ENCODE measurements at regions of chr11 and their contacts with region 1.

Region 1: DNA sequence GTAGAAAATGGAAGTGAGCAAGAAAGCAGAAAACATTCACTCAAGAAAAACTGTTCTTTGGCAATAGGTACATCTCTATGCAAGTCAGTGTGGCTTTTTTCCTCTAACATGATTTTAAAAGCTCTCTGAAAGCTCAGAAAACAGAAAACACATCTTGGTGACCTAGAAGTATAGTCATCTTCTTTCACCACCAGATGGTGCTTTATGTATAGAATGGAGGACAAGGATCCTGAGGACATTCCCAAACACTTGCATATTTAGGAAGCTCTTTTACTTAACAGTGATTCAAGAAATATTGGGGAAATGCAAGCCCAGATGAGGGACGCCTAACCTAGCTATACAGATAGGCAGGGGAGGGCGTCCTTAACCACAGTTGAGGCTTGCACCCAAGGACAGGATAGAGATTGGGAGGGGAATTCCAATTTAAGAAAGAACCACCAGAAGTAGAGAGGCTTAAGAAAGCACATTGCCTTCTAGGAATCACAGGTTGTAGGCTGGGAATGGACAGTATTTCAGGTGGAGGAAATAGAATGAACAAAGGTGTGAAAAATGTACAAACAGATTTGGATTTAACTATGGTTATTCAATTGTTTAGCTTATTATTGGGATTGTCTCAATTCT is 13.8 kb upstream of the CCDC81 start:
- DNase-seq: no peak
- ATAC-seq: peak; percentile 56
- H3K4me3 Mint-ChIP-seq: no peak overlapping the region
- H3K27ac Mint-ChIP-seq: peak overlapping the region; percentile 34; the same call in 1 of the 2 replicates
- H3K4me1 Mint-ChIP-seq: peaks cover 38% of the 10 kb centered on the region
- H3K27me3 Mint-ChIP-seq: no peaks in the 10 kb centered on the region
- CTCF ChIP-seq: no peak

Region 2: DNA sequence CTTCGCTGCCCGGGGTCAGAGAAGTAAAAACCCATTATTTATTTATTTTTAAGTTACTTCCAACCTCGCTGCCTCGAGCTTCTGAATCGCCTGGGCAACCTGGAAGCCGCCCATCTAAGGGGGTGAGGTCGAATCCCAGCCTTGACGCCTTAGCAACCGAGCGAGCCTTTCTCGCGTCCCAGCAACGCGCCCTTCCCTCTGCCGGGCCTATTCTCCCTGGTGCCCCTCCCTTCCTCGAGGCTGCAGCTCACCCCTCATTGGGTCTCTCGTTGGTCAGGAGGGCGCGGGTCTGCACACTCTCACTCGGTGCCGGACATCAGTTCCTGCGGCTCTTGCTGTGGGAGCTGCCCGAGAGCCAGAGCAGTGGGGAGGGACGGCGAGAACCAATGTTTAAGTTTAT is 13.7 kb after region 1 on chr11 and contains the start of gene CCDC81:
- CTCF ChIA-PET with region 1: interaction called, 22 read pairs
- POLR2A ChIA-PET with region 1: interaction called, 3 read pairs
- DNase-seq: peak; percentile 84
- ATAC-seq: peak; percentile 100
- H3K4me3 Mint-ChIP-seq: peak within 1 kb of the TSS; percentile 76
- H3K27ac Mint-ChIP-seq: no peak within 1 kb of the TSS
- H3K4me1 Mint-ChIP-seq: peaks cover 9% of the 10 kb centered on the region
- H3K27me3 Mint-ChIP-seq: peaks cover 6% of the 10 kb centered on the region; the same call in 1 of the 2 replicates
- CTCF ChIP-seq: no peak
- total RNA-seq, gene CCDC81: 0.82 to 1.0 TPM (median 0.98 TPM) in 3 replicates

Region 3: DNA sequence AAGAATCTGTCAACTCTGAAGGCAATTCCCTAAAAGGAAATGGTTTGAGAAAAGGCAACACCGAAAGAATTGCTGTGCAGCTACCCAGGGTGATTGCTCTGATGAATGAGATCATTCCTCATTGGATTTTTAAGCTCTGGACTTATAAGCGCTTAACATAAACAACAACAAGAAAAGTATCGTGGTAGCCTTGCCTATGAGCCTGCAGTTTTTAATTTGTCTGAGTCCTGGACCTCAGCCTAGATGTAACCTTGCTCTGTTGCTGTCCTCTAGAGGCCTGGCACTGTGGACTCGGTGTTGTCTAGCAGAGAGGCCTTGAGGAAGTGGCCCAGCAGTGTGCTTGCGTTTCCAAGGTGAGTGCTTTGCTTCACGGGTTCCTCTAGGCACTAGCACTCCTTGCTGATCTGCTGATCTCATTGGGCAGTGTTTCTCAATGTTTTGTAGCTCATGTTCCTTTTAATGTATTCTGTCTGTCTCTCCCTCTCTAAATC is 34.2 kb after region 1 on chr11:
- CTCF ChIA-PET with region 1: interaction called, 10 read pairs
- POLR2A ChIA-PET with region 1: no interaction called
- DNase-seq: peak; percentile 20
- ATAC-seq: peak; percentile 97
- H3K4me3 Mint-ChIP-seq: no peak overlapping the region
- H3K27ac Mint-ChIP-seq: peak overlapping the region; percentile 61; the same call in 1 of the 2 replicates
- H3K4me1 Mint-ChIP-seq: peaks cover 30% of the 10 kb centered on the region
- H3K27me3 Mint-ChIP-seq: no peaks in the 10 kb centered on the region
- CTCF ChIP-seq: no peak

Region 4: GRCh38 chr11:86418917-86419316 is 58.0 kb after region 1 on chr11:
- CTCF ChIA-PET with region 1: interaction called, 37 read pairs
- POLR2A ChIA-PET with region 1: no interaction called
- DNase-seq: no peak
- ATAC-seq: peak; percentile 71
- H3K4me3 Mint-ChIP-seq: no peak overlapping the region
- H3K27ac Mint-ChIP-seq: no peak overlapping the region
- H3K4me1 Mint-ChIP-seq: no peaks in the 10 kb centered on the region
- H3K27me3 Mint-ChIP-seq: no peaks in the 10 kb centered on the region
- CTCF ChIP-seq: no peak

Region 5: DNA sequence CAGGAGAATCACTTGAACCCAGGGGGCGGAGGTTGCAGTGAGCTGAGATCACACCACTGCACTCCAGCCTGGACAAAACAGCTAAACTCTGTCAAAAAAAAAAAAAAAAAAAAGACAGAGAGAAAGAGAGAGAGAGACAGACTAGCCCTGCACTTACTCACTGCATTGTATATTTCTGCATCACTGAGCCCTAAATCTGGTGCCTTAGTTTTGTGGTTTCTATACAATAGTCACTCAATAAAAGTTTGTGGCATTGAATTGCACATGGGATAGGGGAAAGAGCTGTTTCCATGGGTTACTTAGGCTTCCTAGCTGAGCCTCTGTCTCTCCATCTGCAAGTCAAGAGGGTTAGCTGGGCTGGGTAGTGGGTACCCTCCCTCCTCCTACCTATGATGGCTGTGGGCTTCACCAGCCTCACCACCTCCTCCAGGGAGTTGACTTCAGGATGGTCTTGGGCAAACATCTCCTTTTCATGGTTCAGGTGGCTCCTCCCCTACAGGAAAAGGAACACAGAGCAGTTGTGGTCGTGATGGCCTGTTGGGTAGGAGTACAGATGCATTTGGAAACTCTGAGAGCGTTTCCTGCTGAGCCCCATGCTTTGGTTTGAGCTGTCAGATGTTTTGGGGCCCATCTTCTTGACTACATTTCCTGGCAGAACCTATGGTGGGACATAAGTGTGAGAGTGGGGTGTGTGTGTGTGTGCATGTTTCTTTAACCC is 87.0 kb after region 1 on chr11:
- CTCF ChIA-PET with region 1: interaction called, 10 read pairs
- POLR2A ChIA-PET with region 1: no interaction called
- DNase-seq: no peak
- ATAC-seq: no peak
- H3K4me3 Mint-ChIP-seq: no peak overlapping the region
- H3K27ac Mint-ChIP-seq: no peak overlapping the region
- H3K4me1 Mint-ChIP-seq: no peaks in the 10 kb centered on the region
- H3K27me3 Mint-ChIP-seq: no peaks in the 10 kb centered on the region; the same call in 1 of the 2 replicates
- CTCF ChIP-seq: no peak

Measured in WTC11 (cell line).